BJ (cell line): ENCODE measurements at regions of chr17 and their contacts with region 1.

Region 1: DNA sequence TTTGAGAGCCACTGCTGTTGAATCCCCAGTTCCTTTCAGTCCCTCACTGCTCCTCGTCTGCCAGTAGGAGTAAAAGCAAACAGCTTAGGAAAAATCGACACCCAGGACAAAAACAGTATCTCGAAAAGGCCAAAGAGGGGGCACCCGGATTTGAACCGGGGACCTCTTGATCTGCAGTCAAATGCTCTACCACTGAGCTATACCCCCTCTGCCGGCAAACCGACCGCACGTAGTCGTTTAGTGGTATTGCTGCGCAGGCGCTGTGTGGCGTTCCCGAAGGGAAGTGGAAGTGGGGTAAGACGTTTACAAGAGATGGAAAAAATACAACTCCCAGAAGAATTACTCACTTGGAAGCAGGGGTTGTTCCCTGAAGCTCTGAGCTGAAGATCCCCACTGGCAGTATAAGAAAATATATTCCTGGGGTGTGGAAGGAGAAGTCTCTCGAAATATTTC is 2.2 kb upstream of the PLXDC1 start:
- DNase-seq: peak; percentile 43
- H3K4me3 ChIP-seq: peak overlapping the region; percentile 96
- H3K27me3 ChIP-seq: peaks cover 9% of the 10 kb centered on the region
- CTCF ChIP-seq: 0 out of 2 replicates have a peak, but pooled peaks have one; percentile 13

Region 2: GRCh38 chr17:38868817-38869525 is 284.7 kb before region 1 on chr17:
- CTCF ChIA-PET with region 1: interaction called, 17 read pairs
- POLR2A ChIA-PET with region 1: no interaction called
- DNase-seq: peak; percentile 58
- H3K4me3 ChIP-seq: peak overlapping the region; percentile 97
- H3K27me3 ChIP-seq: no peaks in the 10 kb centered on the region
- CTCF ChIP-seq: peak; percentile 38

Region 3: DNA sequence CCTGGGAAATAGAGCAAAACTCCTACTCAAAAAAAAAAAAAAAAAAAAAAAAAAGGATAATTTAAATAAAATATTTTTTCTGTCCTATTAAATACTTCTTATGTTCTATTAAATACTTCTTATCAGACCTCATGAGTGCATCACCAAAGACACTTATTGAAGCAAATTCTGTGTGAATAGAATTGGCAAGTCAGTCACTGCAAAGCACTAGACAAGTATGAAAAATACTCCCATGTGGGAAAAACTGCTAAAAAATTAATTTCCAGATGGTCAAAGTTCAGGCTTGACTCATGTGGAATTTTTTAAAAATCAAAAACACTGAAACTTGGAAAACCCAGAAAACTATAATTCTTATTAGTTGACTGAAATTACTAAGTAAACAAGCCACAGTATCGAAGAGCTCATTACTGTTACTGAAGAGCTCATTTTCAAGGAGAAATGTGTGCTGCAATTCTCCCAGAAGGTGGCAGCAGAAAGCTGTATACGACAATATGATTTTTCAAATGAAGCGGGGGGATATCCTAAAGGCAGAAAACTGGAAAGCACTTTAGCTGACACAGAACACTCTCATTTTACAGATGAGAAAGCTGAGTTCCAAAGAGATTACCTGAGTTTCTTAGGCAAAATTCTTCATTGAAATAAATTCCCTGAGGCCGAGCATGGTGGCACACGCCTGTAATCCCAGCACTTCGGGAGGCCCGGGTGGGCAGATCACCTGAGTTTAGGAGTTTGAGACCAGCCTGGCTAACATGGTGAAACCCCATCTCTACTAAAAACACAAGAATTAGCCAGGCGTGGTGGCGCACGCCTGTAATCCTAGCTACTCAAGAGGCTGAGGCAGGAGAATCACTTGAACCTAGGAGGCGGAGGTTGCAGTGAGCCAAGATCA is 170.5 kb before region 1 on chr17:
- CTCF ChIA-PET with region 1: interaction called, 234 read pairs
- POLR2A ChIA-PET with region 1: no interaction called
- DNase-seq: no peak
- H3K4me3 ChIP-seq: no peak overlapping the region
- H3K27me3 ChIP-seq: no peaks in the 10 kb centered on the region
- CTCF ChIP-seq: peak; percentile 80

Region 4: DNA sequence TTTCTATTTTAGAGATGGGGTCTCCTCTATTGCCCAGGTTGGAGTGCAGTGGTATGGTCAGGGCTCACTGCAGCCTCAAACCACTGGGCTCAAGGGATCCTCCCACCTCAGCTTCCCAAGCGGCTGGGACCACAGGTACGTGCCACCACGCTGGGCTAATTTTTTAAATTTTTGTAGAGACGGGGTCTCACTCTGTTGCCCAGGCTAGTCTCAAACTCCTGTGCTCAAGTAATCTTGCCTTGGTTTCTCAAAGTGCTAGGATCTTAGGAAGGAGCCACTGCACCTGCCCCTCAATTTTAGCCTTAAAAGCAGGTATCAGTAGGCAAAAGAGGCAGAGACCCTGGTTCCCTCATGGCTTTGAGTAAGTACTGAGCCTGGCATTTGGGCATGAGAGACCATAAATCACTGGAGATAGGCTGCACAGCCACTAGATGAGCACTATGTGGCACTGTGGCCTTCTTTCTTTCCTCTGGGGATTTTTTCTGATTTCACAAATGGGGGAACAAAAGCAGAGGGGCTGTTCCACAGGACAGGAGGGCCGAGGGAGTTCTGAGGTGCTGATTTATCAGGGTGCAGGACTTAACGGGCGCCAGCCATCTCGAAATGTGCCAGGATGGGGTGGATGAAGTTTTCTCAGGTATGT is 84.4 kb before region 1 on chr17:
- CTCF ChIA-PET with region 1: interaction called, 55 read pairs
- POLR2A ChIA-PET with region 1: interaction called, 4 read pairs
- DNase-seq: no peak
- H3K4me3 ChIP-seq: no peak overlapping the region
- H3K27me3 ChIP-seq: peaks cover 3% of the 10 kb centered on the region; the same call in 1 of the 2 replicates
- CTCF ChIP-seq: peak; percentile 72

Region 5: DNA sequence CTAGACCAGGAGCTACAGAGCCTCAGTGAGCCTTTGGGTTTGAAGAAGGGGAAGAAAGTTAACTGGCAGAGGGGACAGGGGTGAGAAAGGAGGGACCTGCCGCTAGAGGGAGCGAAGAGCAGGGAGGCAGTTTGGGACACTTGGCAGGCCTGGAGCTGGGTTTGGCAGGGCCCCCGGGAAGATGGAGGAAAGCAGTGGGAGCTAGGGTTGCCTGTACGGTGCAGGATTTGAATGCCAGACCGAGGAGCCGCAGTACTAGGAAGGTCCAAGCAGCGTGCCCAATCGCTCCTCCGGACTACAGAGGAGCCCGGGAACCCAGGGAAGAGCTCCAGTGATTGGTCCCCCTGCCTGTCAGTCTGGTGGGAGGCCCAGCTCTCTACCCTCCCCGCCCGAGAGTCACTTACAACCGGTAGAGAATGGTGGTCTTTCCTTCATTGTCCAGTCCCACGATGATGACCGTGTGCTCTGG is 11.1 kb after region 1 on chr17:
- CTCF ChIA-PET with region 1: interaction called, 66 read pairs
- POLR2A ChIA-PET with region 1: interaction called, 13 read pairs
- DNase-seq: peak; percentile 51
- H3K4me3 ChIP-seq: peak overlapping the region; percentile 32
- H3K27me3 ChIP-seq: peaks cover 23% of the 10 kb centered on the region
- CTCF ChIP-seq: peak; percentile 94

Region 6: DNA sequence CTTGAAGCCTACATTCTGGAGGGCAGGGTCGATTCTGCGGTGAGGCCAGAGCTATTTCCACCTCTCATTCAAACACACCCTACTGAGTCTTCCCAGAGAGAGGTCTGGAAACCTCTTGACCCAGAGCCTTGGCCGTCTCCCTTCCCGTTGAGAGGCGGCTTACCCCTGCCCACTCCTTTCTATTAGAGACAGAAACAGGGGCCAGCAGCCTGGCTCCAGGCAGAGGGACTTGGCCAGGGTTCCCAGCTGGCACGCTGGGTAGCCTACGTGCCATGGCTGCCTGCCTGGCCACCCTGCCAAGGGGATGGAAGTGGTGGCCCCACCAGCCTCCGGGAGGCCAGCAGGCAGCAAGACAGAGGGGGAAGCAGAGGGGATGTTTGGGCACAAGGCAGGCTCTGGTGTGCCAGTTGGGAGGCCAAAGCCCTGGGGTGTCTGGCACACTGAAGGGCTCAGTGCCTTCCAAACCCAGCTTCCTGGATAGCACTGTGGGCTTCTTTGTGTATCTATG is 66.1 kb after region 1 on chr17:
- CTCF ChIA-PET with region 1: no interaction called
- POLR2A ChIA-PET with region 1: no interaction called
- DNase-seq: no peak
- H3K4me3 ChIP-seq: no peak overlapping the region
- H3K27me3 ChIP-seq: peaks cover 33% of the 10 kb centered on the region
- CTCF ChIP-seq: no peak

Region 7: DNA sequence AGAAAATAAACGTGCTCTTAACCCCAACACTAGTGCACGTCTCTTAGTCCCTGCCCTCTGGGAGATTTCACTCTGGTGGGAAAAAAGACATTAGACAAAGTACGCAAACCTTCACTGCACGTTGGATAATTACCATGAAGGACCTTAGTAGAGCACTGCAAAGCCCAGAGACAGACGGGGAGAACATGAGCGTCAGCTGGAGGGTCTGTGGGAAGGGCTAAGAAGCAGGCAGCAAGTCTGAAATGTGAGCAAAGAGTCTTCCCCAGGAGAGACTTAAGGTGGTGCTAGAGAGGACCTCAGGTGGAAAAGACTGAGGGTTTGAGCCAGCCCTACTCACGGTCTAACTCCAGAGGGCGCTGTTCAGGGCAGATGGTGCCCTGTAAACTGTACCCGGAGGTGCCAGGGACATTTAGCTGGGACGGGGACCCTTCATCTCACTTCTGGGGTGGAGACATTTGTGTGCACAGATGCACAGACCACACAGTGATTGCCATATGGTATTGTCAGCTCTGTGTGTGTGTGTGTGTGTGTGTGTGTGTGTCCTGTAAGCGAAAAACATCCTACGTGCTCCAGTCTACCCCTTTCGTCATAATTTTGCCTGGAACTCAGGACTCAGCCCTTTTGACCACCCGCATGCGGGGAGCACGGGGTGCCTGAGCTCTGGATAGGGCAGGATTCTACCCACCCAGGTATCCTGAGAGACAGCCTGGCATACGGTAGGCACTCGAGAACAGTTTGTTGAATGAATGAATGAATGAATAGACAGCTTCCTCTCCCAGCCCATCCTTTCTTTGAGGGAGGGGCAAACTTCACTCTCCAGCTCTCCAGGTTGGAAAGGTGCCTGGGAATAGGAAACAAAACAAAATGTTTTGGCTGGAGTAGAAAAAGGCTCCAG is 82.2 kb after region 1 on chr17:
- CTCF ChIA-PET with region 1: interaction called, 12 read pairs
- POLR2A ChIA-PET with region 1: no interaction called
- DNase-seq: no peak
- H3K4me3 ChIP-seq: no peak overlapping the region
- H3K27me3 ChIP-seq: peaks cover 2% of the 10 kb centered on the region; the same call in 1 of the 2 replicates
- CTCF ChIP-seq: peak; percentile 71

Region 8: DNA sequence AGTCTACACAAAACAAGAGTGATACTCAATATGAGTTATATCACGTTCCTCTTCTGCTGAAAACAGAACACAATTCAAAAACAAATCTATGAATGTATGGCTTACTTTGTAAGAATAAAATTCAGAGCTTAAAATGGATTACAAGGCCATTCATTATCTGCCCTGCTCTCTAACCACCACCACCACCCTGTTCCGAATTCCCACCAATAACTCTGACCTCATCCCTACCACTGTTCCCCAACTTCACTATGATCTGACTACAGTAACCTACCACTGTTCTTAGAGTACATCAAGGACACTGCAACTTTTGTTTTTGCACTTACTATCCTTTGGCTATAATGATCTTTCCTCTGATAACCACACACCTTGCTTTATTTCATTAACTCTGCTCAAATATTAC is 226.5 kb after region 1 on chr17:
- CTCF ChIA-PET with region 1: no interaction called
- POLR2A ChIA-PET with region 1: no interaction called
- DNase-seq: no peak
- H3K4me3 ChIP-seq: no peak overlapping the region
- H3K27me3 ChIP-seq: no peaks in the 10 kb centered on the region
- CTCF ChIP-seq: no peak